CD14-positive monocyte (primary cell): ENCODE measurements at regions of chr4 and their contacts with region 1.

Region 1: DNA sequence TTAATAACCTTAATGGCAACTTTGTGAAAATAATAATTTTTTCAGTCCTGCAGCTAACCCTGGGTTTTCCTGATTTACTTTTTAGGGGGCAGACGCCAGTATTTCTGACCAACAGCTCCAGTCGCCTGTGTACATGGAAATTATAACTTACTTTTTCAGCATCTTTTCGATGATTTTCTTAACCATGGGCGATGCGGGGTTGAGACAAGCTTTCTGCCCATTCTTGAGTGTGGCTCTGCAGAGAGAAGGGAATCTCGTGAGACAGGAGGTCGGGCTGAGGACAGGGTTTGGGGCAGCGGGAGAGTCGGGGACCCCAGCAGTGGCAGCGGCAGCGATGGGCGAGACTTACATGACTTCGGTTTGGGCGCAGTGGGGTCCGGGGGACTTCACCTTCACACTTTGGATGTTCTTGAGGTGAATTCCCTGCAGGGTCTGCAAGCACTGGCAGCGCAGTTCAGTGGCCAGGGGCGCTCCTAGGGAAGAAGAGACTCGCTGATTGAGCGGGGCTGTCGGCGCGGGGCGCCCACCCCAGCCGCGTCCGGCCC is 473 bp downstream of the CXCL2 start:
- DNase-seq: peak in 1 of 3 donors; percentile 83
- H3K4me3 ChIP-seq: peak overlapping the region; percentile 68 to 73 (median 68)
- H3K4me3 Mint-ChIP-seq: peak overlapping the region; percentile 96
- H3K27ac ChIP-seq: peak overlapping the region; percentile 15 to 89
- H3K27ac Mint-ChIP-seq: peak overlapping the region; percentile 65 to 95 (median 92)
- H3K4me1 ChIP-seq: peaks cover 28 to 35% of the 10 kb centered on the region in 2 donors
- H3K4me1 Mint-ChIP-seq: peaks cover 35% of the 10 kb centered on the region
- H3K27me3 ChIP-seq: no peaks in the 10 kb centered on the region
- H3K27me3 Mint-ChIP-seq: peaks cover 0 to 9% (median 4%) of the 10 kb centered on the region in 3 donors
- CTCF ChIP-seq: no peak

Region 2: GRCh38 chr4:74056858-74057562 is 41.5 kb before region 1 on chr4:
- intact Hi-C with region 1: loop called (anchors 2 to 5 kb)
- DNase-seq: peak; percentile 73 to 86 (median 85)
- H3K4me3 ChIP-seq: peak overlapping the region; percentile 8 to 61 (median 40)
- H3K4me3 Mint-ChIP-seq: peak overlapping the region in 1 of 2 donors; percentile 30
- H3K27ac ChIP-seq: peak overlapping the region in 1 of 2 donors; percentile 87
- H3K27ac Mint-ChIP-seq: peak overlapping the region; percentile 72 to 87 (median 82)
- H3K4me1 ChIP-seq: peaks cover 3 to 7% of the 10 kb centered on the region in 2 donors
- H3K4me1 Mint-ChIP-seq: peaks cover 16% of the 10 kb centered on the region
- H3K27me3 ChIP-seq: no peaks in the 10 kb centered on the region
- H3K27me3 Mint-ChIP-seq: peaks cover 0 to 3% (median 0%) of the 10 kb centered on the region in 3 donors
- CTCF ChIP-seq: no peak

Region 3: GRCh38 chr4:74237425-74237966 is 139.0 kb after region 1 on chr4:
- intact Hi-C with region 1: no loop called
- DNase-seq: no peak
- H3K4me3 ChIP-seq: no peak overlapping the region
- H3K4me3 Mint-ChIP-seq: no peak overlapping the region
- H3K27ac ChIP-seq: no peak overlapping the region
- H3K27ac Mint-ChIP-seq: no peak overlapping the region
- H3K4me1 ChIP-seq: no peaks in the 10 kb centered on the region
- H3K4me1 Mint-ChIP-seq: peaks cover 5% of the 10 kb centered on the region
- H3K27me3 ChIP-seq: no peaks in the 10 kb centered on the region
- H3K27me3 Mint-ChIP-seq: no peaks in the 10 kb centered on the region
- CTCF ChIP-seq: no peak